Activated T-helper 1 cell treated with anti-CD3 and anti-CD28 coated beads, Interleukin-12 subunit alpha, Interleukin-12 subunit beta, Interleukin-2, Interleukin-4 antibody, amounts not matched to agents 30 ng/mL and 10 ng/mL and 1 ng/mL, durations not matched to agents 14 hours and 24 hours and 36 hours (primary cell): ENCODE measurements at regions of chr7 and their contacts with region 1.

Region 1: GRCh38 chr7:135509903-135510602 is at the start of gene CNOT4:
- DNase-seq: peak; percentile 92
- H3K4me3 Mint-ChIP-seq: no peak within 1 kb of the TSS
- H3K27ac Mint-ChIP-seq: no peak within 1 kb of the TSS
- H3K4me1 Mint-ChIP-seq: no peaks in the 10 kb centered on the region
- H3K27me3 Mint-ChIP-seq: no peaks in the 10 kb centered on the region
- total RNA-seq, gene CNOT4: 21.3 and 23.3 TPM in 2 replicates

Region 2: GRCh38 chr7:134986363-134987251 is 523.4 kb before region 1 on chr7 and contains the start of gene AGBL3:
- intact Hi-C with region 1: loop called (anchors 5 kb)
- DNase-seq: peak; percentile 87
- H3K4me3 Mint-ChIP-seq: peak within 1 kb of the TSS; percentile 97
- H3K27ac Mint-ChIP-seq: peak within 1 kb of the TSS; percentile 86
- H3K4me1 Mint-ChIP-seq: peaks cover 49% of the 10 kb centered on the region
- H3K27me3 Mint-ChIP-seq: no peaks in the 10 kb centered on the region
- total RNA-seq, gene AGBL3: 1.5 and 1.9 TPM in 2 replicates

Region 3: DNA sequence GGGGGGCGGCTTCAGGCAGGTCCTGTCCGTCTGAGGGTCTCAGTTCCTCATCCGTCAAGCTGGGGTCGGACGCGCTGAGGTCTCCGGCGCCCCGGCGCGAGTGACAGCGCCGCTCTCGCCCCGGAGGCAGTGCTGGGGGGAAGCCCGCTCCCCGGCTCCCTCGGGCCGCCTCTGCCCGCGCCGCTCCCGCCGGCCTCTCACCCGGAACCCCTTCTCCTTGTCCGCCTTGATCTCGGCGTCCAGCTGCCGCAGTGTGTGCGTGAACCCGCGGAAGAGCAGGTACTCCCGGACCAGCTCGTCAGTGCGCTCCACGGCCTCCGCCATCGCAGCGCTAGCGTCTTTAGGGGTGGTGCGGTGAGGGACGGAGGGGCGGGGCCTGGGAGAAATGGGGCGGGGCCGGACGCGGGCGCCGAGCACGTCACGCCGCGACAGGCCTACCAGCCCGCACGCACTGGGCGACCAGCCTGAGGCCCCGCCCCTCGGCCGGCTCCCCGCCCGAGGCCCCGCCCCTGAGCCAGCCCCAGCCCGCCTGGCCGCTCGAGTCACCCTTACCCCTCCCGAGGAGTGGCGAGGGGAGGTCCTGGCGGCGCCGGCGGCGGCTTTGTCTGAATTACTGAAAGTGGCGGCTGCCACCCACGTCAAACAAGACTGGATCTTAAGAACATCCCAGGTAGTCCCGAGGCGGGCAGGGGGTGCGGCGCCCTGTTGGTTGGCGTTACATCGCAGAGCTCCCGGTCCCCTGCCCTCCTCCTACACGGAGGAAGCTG is 298.7 kb before region 1 on chr7 and contains the start of gene WDR91:
- intact Hi-C with region 1: loop called (anchors 1 kb)
- DNase-seq: peak; percentile 86
- H3K4me3 Mint-ChIP-seq: peak within 1 kb of the TSS; percentile 96
- H3K27ac Mint-ChIP-seq: peak within 1 kb of the TSS; percentile 98
- H3K4me1 Mint-ChIP-seq: peaks cover 47% of the 10 kb centered on the region
- H3K27me3 Mint-ChIP-seq: no peaks in the 10 kb centered on the region
- total RNA-seq, gene WDR91: 34.6 and 35.4 TPM in 2 replicates

Region 4: GRCh38 chr7:135414850-135415439 is 95.1 kb before region 1 on chr7:
- intact Hi-C with region 1: loop called (anchors 2 kb)
- DNase-seq: no peak
- H3K4me3 Mint-ChIP-seq: no peak overlapping the region
- H3K27ac Mint-ChIP-seq: no peak overlapping the region
- H3K4me1 Mint-ChIP-seq: peaks cover 6% of the 10 kb centered on the region
- H3K27me3 Mint-ChIP-seq: no peaks in the 10 kb centered on the region

Region 5: GRCh38 chr7:135558337-135558767 is 48.3 kb after region 1 on chr7:
- intact Hi-C with region 1: loop called (anchors 1 kb)
- DNase-seq: peak; percentile 60
- H3K4me3 Mint-ChIP-seq: no peak overlapping the region
- H3K27ac Mint-ChIP-seq: no peak overlapping the region
- H3K4me1 Mint-ChIP-seq: peaks cover 16% of the 10 kb centered on the region
- H3K27me3 Mint-ChIP-seq: no peaks in the 10 kb centered on the region

Region 6: GRCh38 chr7:135662373-135663114 is 152.5 kb after region 1 on chr7 and contains the start of gene STMP1:
- intact Hi-C with region 1: loop called (anchors 1 kb)
- DNase-seq: peak; percentile 93
- H3K4me3 Mint-ChIP-seq: peak within 1 kb of the TSS; percentile 97
- H3K27ac Mint-ChIP-seq: peak within 1 kb of the TSS; percentile 93
- H3K4me1 Mint-ChIP-seq: peaks cover 22% of the 10 kb centered on the region
- H3K27me3 Mint-ChIP-seq: no peaks in the 10 kb centered on the region
- total RNA-seq, gene STMP1: 22.7 and 24.7 TPM in 2 replicates

Region 7: GRCh38 chr7:135795846-135796570 is 286.0 kb after region 1 on chr7:
- intact Hi-C with region 1: no loop called
- DNase-seq: no peak
- H3K4me3 Mint-ChIP-seq: no peak overlapping the region
- H3K27ac Mint-ChIP-seq: no peak overlapping the region
- H3K4me1 Mint-ChIP-seq: peaks cover 5% of the 10 kb centered on the region
- H3K27me3 Mint-ChIP-seq: peaks cover 2% of the 10 kb centered on the region